ENCODE measurements at regions of chr6 and their contacts with region 1.

Region 1: DNA sequence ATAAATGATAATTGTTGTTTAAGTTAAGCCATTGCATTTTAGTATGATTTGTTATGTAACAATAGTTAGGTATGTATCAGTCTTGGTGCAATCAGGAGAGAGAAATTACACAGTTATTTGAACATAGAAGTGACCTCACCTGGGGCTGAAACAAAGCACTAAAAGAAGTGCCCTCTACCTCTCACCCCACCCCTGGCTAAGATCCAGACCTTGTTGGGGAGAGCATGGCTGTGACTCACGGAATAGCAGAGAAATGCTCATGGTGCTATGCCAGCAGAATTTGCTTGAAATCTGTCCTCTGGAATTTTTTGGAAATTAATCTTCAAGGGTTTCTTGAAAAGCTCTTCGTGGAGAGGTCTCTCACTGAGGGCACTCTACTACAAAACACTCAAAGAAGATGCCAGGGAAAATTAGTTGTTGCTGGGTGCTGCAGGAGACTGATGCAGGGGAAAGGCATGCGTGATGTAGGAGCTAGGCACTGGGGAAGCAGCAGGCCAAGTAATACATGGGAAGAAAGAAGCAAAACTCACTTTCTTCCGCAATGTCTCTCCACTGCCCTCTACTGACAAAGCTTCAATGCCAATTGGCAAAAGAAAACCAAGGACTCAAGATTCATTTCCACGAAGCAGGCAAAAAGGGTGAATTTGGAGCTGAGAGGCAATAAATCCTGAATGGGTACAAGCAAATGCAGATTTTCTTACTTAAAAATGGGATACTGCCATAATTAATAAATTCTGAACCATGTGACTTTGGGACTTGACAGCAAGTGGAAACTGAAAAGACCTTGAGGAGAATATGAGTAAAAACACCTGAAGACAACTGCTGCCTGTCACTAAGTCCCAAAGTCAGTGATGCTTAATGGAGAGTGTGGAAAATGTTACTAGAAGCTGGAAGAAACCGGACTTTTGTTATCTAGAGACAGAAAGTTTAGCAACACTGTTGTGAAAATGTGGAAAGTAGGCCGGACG is 136.3 kb upstream of the ZNF184 start:
- DNase-seq: no peak
- ATAC-seq: no peak
- H3K4me3 Mint-ChIP-seq: no peak overlapping the region
- H3K27ac Mint-ChIP-seq: no peak overlapping the region
- H3K4me1 Mint-ChIP-seq: peaks cover 13% of the 10 kb centered on the region
- H3K27me3 Mint-ChIP-seq: peaks cover 44% of the 10 kb centered on the region
- CTCF ChIP-seq: peak; percentile 71

Region 2: GRCh38 chr6:27177485-27178406 is 431.5 kb before region 1 on chr6:
- CTCF ChIA-PET with region 1: interaction called, 4 read pairs
- POLR2A ChIA-PET with region 1: no interaction called
- intact Hi-C with region 1: loop called (anchors 10 kb)
- DNase-seq: peak; percentile 86
- ATAC-seq: peak; percentile 88
- H3K4me3 Mint-ChIP-seq: peak overlapping the region; percentile 94
- H3K27ac Mint-ChIP-seq: peak overlapping the region; percentile 87
- H3K4me1 Mint-ChIP-seq: peaks cover 3% of the 10 kb centered on the region
- H3K27me3 Mint-ChIP-seq: peaks cover 2% of the 10 kb centered on the region
- CTCF ChIP-seq: peak; percentile 53

Region 3: DNA sequence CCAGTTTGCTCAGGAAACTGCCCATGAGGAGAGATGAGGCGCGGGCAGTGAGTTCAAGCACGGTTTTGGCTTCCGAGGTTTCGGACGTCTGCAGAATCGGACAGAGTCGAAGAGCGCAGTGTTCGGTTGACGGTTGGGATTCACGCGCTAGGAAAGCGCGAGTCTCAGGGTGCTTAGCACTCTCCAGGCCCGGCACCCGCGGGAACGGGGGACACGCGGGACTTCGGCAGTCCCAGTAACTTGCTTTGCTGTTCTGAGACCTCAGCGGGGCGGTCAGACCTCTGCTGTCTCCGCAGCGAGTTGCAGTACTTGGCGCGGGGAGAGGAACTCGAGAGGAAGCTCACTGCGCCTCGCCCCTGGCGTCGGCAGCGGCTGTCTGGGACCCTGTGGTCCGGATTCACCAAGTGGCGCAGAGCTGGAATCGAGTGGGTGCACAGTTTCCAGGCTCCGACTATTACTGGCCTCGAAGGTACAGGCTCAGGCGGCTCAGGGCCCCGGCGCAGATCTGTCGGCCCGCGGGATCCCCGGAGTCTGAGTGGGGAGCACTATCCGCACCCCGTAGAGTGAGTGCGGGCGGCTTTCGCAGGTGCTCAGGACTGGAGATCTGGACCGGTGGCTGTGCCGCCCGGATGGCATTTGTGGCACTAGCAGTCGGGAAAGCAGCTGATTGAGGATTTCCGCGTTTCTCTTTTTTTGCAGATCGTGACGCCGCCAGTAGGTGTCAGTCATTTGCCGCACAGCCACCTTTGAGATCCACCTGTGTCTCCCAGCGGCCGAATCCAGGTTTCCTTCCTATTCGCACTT is 296.9 kb before region 1 on chr6 and contains the start of gene POM121L2:
- CTCF ChIA-PET with region 1: interaction called, 5 read pairs
- POLR2A ChIA-PET with region 1: no interaction called
- intact Hi-C with region 1: loop called (anchors 10 kb)
- DNase-seq: peak; percentile 72
- ATAC-seq: peak; percentile 74
- H3K4me3 Mint-ChIP-seq: peak within 1 kb of the TSS; percentile 75
- H3K27ac Mint-ChIP-seq: no peak within 1 kb of the TSS
- H3K4me1 Mint-ChIP-seq: peaks cover 5% of the 10 kb centered on the region
- H3K27me3 Mint-ChIP-seq: peaks cover 62% of the 10 kb centered on the region
- CTCF ChIP-seq: peak; percentile 84
- total RNA-seq, gene POM121L2: not detected

Region 4: GRCh38 chr6:27518881-27519795 is 90.1 kb before region 1 on chr6:
- CTCF ChIA-PET with region 1: interaction called, 15 read pairs
- POLR2A ChIA-PET with region 1: no interaction called
- intact Hi-C with region 1: loop called (anchors 2 kb)
- DNase-seq: peak; percentile 80
- ATAC-seq: peak; percentile 77
- H3K4me3 Mint-ChIP-seq: peak overlapping the region; percentile 87
- H3K27ac Mint-ChIP-seq: peak overlapping the region; percentile 87
- H3K4me1 Mint-ChIP-seq: peaks cover 19% of the 10 kb centered on the region
- H3K27me3 Mint-ChIP-seq: peaks cover 20% of the 10 kb centered on the region
- CTCF ChIP-seq: peak; percentile 88

Region 5: GRCh38 chr6:27565821-27566766 is 43.1 kb before region 1 on chr6:
- CTCF ChIA-PET with region 1: no interaction called
- POLR2A ChIA-PET with region 1: no interaction called
- intact Hi-C with region 1: no loop called
- DNase-seq: no peak
- ATAC-seq: peak; percentile 45
- H3K4me3 Mint-ChIP-seq: peak overlapping the region; percentile 34
- H3K27ac Mint-ChIP-seq: no peak overlapping the region
- H3K4me1 Mint-ChIP-seq: peaks cover 6% of the 10 kb centered on the region
- H3K27me3 Mint-ChIP-seq: peaks cover 55% of the 10 kb centered on the region
- CTCF ChIP-seq: peak; percentile 16

Region 6: DNA sequence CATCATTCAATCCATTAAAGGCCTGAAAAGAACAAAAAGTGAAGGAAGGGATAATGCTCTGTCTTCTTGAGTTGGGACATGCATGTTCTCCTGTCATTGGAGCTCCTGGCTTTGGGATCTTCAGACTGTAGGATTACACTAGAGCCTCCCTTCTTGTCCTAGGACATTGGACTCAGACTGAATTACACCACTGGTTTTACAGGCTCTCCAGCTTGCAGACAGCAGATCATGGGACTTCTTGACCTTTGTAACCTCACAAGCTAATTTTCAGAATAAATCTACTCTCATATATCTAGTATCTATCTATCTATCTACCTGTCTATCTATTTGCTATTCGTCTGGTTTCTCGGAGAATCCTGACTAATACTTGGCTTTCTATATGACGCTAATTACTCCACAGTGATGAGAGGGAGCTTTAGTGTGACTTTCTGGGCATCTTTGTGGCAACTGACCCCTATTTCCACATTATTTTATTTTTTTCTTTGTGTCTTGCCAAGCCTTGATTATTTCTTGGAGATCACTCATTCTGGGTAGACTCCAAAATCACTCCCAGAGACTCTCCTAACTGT is 15.6 kb after region 1 on chr6:
- CTCF ChIA-PET with region 1: interaction called, 12 read pairs
- POLR2A ChIA-PET with region 1: interaction called, 3 read pairs
- intact Hi-C with region 1: no loop called
- DNase-seq: no peak
- ATAC-seq: no peak
- H3K4me3 Mint-ChIP-seq: no peak overlapping the region
- H3K27ac Mint-ChIP-seq: no peak overlapping the region
- H3K4me1 Mint-ChIP-seq: no peaks in the 10 kb centered on the region
- H3K27me3 Mint-ChIP-seq: peaks cover 49% of the 10 kb centered on the region
- CTCF ChIP-seq: no peak